ENCODE measurements at regions of chr5 and their contacts with region 1.

Region 1: DNA sequence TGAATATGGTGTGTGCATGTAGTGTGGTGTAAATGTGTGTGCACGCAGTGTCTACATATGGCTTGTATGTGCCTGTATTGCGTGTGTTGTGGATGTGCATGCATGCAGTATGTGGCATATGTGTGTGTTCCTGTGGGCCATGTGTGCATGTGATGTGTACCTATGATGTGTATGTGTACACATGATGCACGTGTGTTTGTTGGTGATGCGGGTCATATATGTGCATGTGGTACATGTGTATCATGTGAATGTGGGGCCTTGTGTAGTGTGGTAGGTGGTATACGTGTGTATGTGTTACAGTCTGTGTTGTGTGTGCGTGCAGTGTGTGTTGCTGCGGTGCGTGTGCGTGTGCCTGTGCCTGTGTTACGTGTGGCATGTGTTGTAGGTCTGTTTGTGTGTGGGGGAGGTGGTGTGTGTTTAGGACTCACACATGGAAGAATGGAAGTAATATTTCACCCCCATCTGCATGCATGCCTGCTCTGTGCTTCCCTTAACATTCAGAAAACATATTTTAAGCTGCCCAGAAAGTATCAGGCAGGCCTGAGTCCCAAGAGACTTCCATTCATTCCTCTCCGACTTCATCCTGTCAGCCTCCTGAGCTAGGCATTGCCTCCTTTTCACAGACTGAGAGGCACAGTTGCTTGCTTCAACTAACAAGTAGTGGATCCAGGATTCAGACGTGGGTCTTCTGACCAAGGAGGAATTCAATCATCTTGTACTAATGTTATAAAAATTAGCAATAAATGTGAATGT is 55.4 kb upstream of the RUFY1 start:
- DNase-seq: no peak
- ATAC-seq: no peak
- H3K4me3 ChIP-seq: no peak overlapping the region
- H3K27ac ChIP-seq: no peak overlapping the region
- H3K4me1 ChIP-seq: no peaks in the 10 kb centered on the region
- H3K27me3 ChIP-seq: no peaks in the 10 kb centered on the region
- CTCF ChIP-seq: no peak

Region 2: GRCh38 chr5:179166886-179167841 is 327.8 kb before region 1 on chr5:
- intact Hi-C with region 1: loop called in 2 of 3 experiments (anchors 5 kb)
- DNase-seq: peak in 5 of 6 donors; percentile 18 to 87 (median 43)
- ATAC-seq: peak; percentile 78 to 88 (median 88)
- H3K4me3 ChIP-seq: peak overlapping the region in 3 of 4 donors; percentile 1 to 32 (median 20)
- H3K27ac ChIP-seq: no peak overlapping the region
- H3K4me1 ChIP-seq: peaks cover 0 to 4% (median 0%) of the 10 kb centered on the region in 3 donors
- H3K27me3 ChIP-seq: no peaks in the 10 kb centered on the region
- CTCF ChIP-seq: peak; percentile 85 to 98 (median 94)

Measured in pancreas (tissue), 10 donors.